ENCODE measurements at regions of chr7 and their contacts with region 1.

Region 1: GRCh38 chr7:18345641-18346234 is 149.8 kb upstream of the HDAC9 start:
- DNase-seq: peak; percentile 51
- H3K4me3 ChIP-seq: no peak overlapping the region
- H3K27ac ChIP-seq: no peak overlapping the region
- H3K4me1 ChIP-seq: no peaks in the 10 kb centered on the region
- H3K27me3 ChIP-seq: no peaks in the 10 kb centered on the region
- CTCF ChIP-seq: peak; percentile 69

Region 2: DNA sequence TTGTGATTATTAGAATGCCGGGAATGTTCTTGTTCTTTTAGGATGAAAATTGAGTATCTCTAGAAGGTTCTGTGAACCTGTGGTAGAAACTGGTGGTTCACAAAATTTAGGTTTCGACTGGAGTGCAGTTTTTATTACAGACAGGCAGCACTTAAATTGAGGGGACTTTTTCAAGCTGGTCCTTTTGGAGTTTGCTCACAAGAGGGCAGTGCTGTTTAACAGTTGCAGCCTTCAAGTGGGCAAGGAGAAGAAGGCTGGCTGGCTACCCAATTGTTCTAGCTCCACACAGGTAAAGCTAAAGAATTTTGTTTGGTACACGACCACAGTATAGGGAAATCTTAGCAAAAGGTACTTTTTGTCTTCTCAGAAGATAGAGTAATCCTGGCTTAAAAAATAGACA is 639.0 kb before region 1 on chr7:
- intact Hi-C with region 1: loop called (anchors 10 kb)
- DNase-seq: peak; percentile 45
- H3K4me3 ChIP-seq: no peak overlapping the region
- H3K27ac ChIP-seq: no peak overlapping the region
- H3K4me1 ChIP-seq: no peaks in the 10 kb centered on the region
- H3K27me3 ChIP-seq: no peaks in the 10 kb centered on the region
- CTCF ChIP-seq: peak; percentile 37

Region 3: GRCh38 chr7:18064242-18064838 is 281.4 kb before region 1 on chr7:
- intact Hi-C with region 1: loop called (anchors 10 kb)
- DNase-seq: peak; percentile 47
- H3K4me3 ChIP-seq: no peak overlapping the region
- H3K27ac ChIP-seq: no peak overlapping the region
- H3K4me1 ChIP-seq: no peaks in the 10 kb centered on the region
- H3K27me3 ChIP-seq: no peaks in the 10 kb centered on the region
- CTCF ChIP-seq: peak; percentile 33

Region 4: DNA sequence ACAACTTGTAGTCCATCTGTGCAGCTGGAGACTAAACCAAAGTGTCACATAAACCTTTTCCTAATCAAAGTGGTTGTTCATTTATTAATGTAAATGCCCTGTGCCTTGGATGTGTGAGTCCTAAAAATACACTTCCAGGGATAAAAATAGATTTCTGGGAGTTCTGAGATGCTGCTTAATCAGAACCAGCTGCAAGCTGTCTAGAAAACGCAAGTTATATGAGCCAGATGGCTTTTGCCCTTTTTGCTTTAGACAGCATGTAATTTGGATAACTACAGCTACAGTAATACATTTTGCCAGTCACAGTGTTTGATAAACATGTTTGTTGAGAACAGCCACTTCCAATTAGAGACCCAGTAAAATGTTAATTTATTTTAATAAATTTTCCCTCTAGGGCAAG is 133.0 kb before region 1 on chr7:
- intact Hi-C with region 1: loop called (anchors 5 kb)
- DNase-seq: no peak
- H3K4me3 ChIP-seq: no peak overlapping the region
- H3K27ac ChIP-seq: no peak overlapping the region
- H3K4me1 ChIP-seq: no peaks in the 10 kb centered on the region
- H3K27me3 ChIP-seq: no peaks in the 10 kb centered on the region
- CTCF ChIP-seq: no peak

Region 5: DNA sequence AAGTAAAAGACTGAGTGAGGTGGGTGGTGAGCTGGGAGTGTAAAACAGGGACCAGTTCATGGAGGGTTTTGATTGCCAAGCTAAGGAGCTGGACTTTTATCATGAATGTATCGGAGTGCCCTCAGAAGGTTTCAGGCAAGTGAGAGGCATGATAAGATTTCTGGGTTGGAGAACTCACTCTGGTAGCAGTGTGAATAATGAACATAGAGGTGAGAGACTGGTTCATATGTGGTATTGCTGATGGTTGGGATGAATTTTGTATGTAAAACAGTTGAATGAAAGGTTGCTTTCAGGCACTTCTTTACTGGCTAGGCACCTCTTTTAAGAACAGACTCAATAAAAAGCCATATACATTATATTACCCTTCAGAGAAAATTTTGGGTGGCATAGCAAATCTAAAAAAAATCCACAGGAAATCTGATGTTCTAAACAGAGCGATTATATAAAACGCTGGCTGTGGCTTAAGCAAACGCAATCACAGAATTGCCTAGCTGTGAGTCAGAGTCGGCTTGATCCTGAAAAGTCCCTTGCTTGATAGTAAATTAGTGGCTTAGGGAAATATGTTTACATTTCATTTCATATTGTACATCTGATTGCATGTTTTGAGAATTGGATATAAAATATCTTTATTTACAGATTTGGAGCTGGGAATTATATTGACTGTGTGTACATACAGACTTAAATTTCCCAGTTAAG is 56.9 kb after region 1 on chr7:
- intact Hi-C with region 1: no loop called
- DNase-seq: no peak
- H3K4me3 ChIP-seq: no peak overlapping the region
- H3K27ac ChIP-seq: no peak overlapping the region
- H3K4me1 ChIP-seq: no peaks in the 10 kb centered on the region
- H3K27me3 ChIP-seq: no peaks in the 10 kb centered on the region
- CTCF ChIP-seq: no peak